ENCODE measurements at regions of chr3 and their contacts with region 1.

Region 1: DNA sequence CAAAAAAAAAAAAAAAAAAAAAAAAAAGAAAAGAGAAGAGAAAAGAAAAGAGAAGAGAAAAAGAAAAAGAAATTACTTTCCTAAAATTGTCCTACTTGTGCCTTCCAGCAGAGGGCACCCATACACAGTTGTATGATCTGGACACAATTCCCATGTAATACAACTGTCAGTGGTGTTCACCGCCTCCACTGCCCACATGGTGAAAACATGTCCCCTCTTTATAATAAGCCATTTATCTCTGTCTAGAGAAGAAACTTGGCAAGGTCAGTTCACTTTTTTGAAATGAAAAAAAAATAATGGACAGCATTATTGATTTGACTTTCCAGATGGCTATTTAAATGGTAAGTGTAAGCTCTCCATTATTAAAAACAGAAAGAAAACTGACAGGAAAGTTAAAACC is 459.4 kb downstream of the GBE1 start:
- DNase-seq: no peak
- H3K4me3 Mint-ChIP-seq: no peak overlapping the region
- H3K27ac Mint-ChIP-seq: no peak overlapping the region
- H3K4me1 Mint-ChIP-seq: no peaks in the 10 kb centered on the region
- H3K27me3 Mint-ChIP-seq: no peaks in the 10 kb centered on the region

Region 2: GRCh38 chr3:81326245-81326644 is 24.2 kb after region 1 on chr3:
- intact Hi-C with region 1: no loop called
- DNase-seq: no peak
- H3K4me3 Mint-ChIP-seq: no peak overlapping the region
- H3K27ac Mint-ChIP-seq: no peak overlapping the region
- H3K4me1 Mint-ChIP-seq: no peaks in the 10 kb centered on the region
- H3K27me3 Mint-ChIP-seq: no peaks in the 10 kb centered on the region

Region 3: GRCh38 chr3:81338676-81339555 is 36.9 kb after region 1 on chr3:
- intact Hi-C with region 1: no loop called
- DNase-seq: no peak
- H3K4me3 Mint-ChIP-seq: no peak overlapping the region
- H3K27ac Mint-ChIP-seq: no peak overlapping the region
- H3K4me1 Mint-ChIP-seq: no peaks in the 10 kb centered on the region
- H3K27me3 Mint-ChIP-seq: no peaks in the 10 kb centered on the region

Region 4: GRCh38 chr3:81485444-81485865 is 183.4 kb after region 1 on chr3:
- intact Hi-C with region 1: loop called (anchors 5 kb)
- DNase-seq: no peak
- H3K4me3 Mint-ChIP-seq: no peak overlapping the region
- H3K27ac Mint-ChIP-seq: no peak overlapping the region
- H3K4me1 Mint-ChIP-seq: no peaks in the 10 kb centered on the region
- H3K27me3 Mint-ChIP-seq: no peaks in the 10 kb centered on the region

Measured in activated T-helper 2 cell treated with anti-CD3 and anti-CD28 coated beads, Interferon-gamma antibody, Interleukin-2, Interleukin-4, amounts not matched to agents 10 μg/mL and 5 μg/mL and 100 μg/mL, durations not matched to agents 14 hours and 24 hours and 36 hours (primary cell).